ENCODE measurements at regions of chrX and their contacts with region 1.

Region 1: DNA sequence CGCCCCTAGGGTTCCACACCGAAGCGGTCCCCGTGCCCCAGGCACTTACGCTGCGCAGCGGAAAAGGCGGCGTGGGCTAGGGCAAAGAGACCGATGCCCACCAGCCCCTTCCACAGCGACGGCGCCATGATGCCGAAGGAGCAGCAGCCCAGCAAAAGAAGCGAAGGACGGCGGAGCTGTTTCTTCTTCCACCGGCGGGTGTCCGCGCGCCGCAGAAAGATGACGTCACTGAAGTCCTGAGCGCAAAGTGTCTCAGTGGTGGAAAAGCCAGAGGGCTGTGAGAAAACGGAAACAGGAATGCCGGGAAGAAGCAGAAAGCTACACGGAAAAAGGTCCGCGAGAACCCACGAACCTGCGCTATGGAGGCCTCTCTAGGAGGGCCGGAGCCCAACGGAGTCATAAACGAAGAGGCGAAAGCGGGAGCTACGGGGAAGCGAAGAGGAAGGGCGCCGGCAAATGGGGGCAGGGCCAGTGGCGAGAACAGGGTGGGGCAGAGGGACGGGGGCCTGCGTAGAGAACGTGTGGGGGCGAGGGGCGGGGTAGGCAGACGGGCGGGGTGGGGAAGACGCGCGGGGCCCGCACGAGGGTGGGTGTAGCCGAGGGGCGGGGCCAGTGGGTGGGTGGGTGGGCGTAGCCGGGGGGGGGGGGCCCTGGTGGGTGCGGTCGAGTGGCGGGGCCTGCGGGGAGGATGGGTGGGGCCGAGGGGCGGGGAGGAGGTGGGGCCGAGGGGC is at the start of gene MMGT1:
- DNase-seq: peak; percentile 64 to 90
- ATAC-seq: peak; percentile 83 to 90 (median 84)
- H3K4me3 ChIP-seq: peak within 1 kb of the TSS; percentile 97
- H3K4me3 Mint-ChIP-seq: peak within 1 kb of the TSS; percentile 97
- H3K27ac ChIP-seq: peak within 1 kb of the TSS; percentile 97
- H3K27ac Mint-ChIP-seq: peak within 1 kb of the TSS; percentile 97 to 98
- H3K4me1 ChIP-seq: peaks cover 12% of the 10 kb centered on the region
- H3K4me1 Mint-ChIP-seq: peaks cover 20 to 28% of the 10 kb centered on the region in 2 donors
- H3K27me3 ChIP-seq: no peaks in the 10 kb centered on the region
- H3K27me3 Mint-ChIP-seq: peaks cover 0 to 7% of the 10 kb centered on the region in 2 donors
- CTCF ChIP-seq: no peak
- total RNA-seq, gene MMGT1: 18.2 to 22.2 (median 21.4) TPM

Region 2: GRCh38 chrX:136496770-136497598 is 523.3 kb after region 1 on chrX and contains the start of gene HTATSF1:
- intact Hi-C with region 1: loop called (anchors 10 kb)
- DNase-seq: peak; percentile 78 to 93
- ATAC-seq: peak; percentile 79 to 92 (median 81)
- H3K4me3 ChIP-seq: peak within 1 kb of the TSS; percentile 84
- H3K4me3 Mint-ChIP-seq: peak within 1 kb of the TSS; percentile 89
- H3K27ac ChIP-seq: peak within 1 kb of the TSS; percentile 96
- H3K27ac Mint-ChIP-seq: peak within 1 kb of the TSS; percentile 93
- H3K4me1 ChIP-seq: peaks cover 5% of the 10 kb centered on the region
- H3K4me1 Mint-ChIP-seq: peaks cover 12 to 16% of the 10 kb centered on the region in 2 donors
- H3K27me3 ChIP-seq: no peaks in the 10 kb centered on the region
- H3K27me3 Mint-ChIP-seq: peaks cover 5 to 10% of the 10 kb centered on the region in 2 donors
- CTCF ChIP-seq: no peak
- total RNA-seq, gene HTATSF1: 26.4 to 30.4 (median 28.2) TPM